A549 (cell line): ENCODE measurements at regions of chr1 and their contacts with region 1.

Region 1: DNA sequence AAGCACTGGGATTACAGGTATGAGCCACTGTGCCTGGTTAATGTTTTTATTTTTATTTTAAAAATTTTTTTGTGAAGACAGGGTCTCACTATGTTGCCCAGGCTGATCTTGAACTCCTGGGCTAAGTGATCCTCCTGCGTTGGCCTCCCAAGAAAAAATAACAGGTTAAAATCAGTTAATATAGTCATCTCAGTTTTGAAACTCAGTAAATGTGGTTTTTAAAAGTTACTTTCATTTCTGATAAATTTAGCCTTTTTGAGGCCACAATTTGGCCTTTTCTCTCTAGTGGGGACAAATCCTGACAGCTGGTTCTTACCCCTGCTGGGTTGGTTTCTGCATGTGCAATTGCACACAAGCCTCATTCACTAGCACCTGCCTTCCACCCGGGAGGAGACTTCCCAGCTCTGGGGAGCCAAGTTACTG is 13.3 kb downstream of the PMF1 start:
- DNase-seq: no peak
- ATAC-seq: no peak
- H3K4me3 ChIP-seq: no peak overlapping the region
- H3K27ac ChIP-seq: no peak overlapping the region
- H3K4me1 ChIP-seq: peaks cover 14% of the 10 kb centered on the region
- CTCF ChIP-seq: no peak
- EP300 ChIP-seq: no peak
- POLR2A ChIP-seq: no peak
- RAD21 ChIP-seq: no peak

Region 2: GRCh38 chr1:156082309-156083091 is 143.6 kb before region 1 on chr1 and contains the start of gene MEX3A:
- CTCF ChIA-PET with region 1: interaction called, 291 read pairs
- POLR2A ChIA-PET with region 1: no interaction called
- DNase-seq: peak; percentile 59 to 86
- ATAC-seq: peak; percentile 78 to 88
- H3K4me3 ChIP-seq: peak within 1 kb of the TSS; percentile 83
- H3K27ac ChIP-seq: peak within 1 kb of the TSS; percentile 88 to 93
- H3K4me1 ChIP-seq: peaks cover 29% of the 10 kb centered on the region
- CTCF ChIP-seq: no peak
- EP300 ChIP-seq: no peak
- POLR2A ChIP-seq: 0 out of 2 replicates have a peak, but pooled peaks have one; percentile 9
- RAD21 ChIP-seq: no peak
- polyA plus RNA-seq, gene MEX3A: 1.8 and 2.4 TPM in 2 replicates

Region 3: GRCh38 chr1:156160743-156161171 is 65.4 kb before region 1 on chr1:
- CTCF ChIA-PET with region 1: interaction called, 639 read pairs
- POLR2A ChIA-PET with region 1: no interaction called
- DNase-seq: no peak
- ATAC-seq: no peak
- H3K4me3 ChIP-seq: no peak overlapping the region
- H3K27ac ChIP-seq: no peak overlapping the region
- H3K4me1 ChIP-seq: no peaks in the 10 kb centered on the region
- CTCF ChIP-seq: no peak
- EP300 ChIP-seq: no peak
- POLR2A ChIP-seq: no peak
- RAD21 ChIP-seq: no peak

Region 4: GRCh38 chr1:156193488-156194299 is 32.4 kb before region 1 on chr1 and contains the start of gene SLC25A44:
- CTCF ChIA-PET with region 1: interaction called, 47 read pairs
- POLR2A ChIA-PET with region 1: interaction called, 7 read pairs
- DNase-seq: peak; percentile 95 to 99
- ATAC-seq: peak; percentile 98
- H3K4me3 ChIP-seq: peak within 1 kb of the TSS; percentile 84
- H3K27ac ChIP-seq: peak within 1 kb of the TSS; percentile 88 to 89
- H3K4me1 ChIP-seq: 0 out of 3 replicates have a peak, but pooled peaks cover 9% of the 10 kb centered on the region
- CTCF ChIP-seq: no peak
- EP300 ChIP-seq: no peak
- POLR2A ChIP-seq: peak; percentile 83
- RAD21 ChIP-seq: no peak; a peak in 1 of 5 replicates
- polyA plus RNA-seq, gene SLC25A44: 30.7 and 38.8 TPM in 2 replicates

Region 5: DNA sequence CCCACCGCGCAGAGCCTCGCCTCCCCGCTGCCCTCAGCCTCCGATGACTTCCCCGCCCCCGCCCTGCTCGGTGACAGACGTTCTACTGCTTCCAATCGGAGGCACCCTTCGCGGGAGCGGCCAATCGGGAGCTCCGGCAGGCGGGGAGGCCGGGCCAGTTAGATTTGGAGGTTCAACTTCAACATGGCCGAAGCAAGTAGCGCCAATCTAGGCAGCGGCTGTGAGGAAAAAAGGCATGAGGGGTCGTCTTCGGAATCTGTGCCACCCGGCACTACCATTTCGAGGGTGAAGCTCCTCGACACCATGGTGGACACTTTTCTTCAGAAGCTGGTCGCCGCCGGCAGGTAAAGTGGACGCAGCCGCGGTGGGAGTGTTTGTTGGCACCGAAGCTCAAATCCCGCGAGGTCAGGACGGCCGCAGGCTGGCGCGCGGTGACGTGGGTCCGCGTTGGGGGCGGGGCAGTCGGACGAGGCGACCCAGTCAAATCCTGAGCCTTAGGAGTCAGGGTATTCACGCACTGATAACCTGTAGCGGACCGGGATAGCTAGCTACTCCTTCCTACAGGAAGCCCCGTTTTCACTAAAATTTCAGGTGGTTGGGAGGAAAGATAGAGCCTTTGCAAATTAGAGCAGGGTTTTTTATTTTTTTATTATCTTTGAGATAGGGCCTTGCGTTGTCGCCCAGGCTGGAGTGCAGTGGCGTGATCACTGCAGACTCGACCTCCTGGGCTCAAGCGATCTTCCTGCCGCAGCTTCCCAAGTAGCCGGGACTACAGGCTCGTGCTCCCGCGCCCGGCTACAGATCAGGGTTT is 13.1 kb before region 1 on chr1 and contains the start of gene PMF1:
- CTCF ChIA-PET with region 1: interaction called, 84 read pairs
- POLR2A ChIA-PET with region 1: interaction called, 13 read pairs
- DNase-seq: peak; percentile 96 to 100
- ATAC-seq: peak; percentile 98
- H3K4me3 ChIP-seq: peak within 1 kb of the TSS; percentile 65
- H3K27ac ChIP-seq: peak within 1 kb of the TSS; percentile 93 to 96
- H3K4me1 ChIP-seq: peaks cover 13% of the 10 kb centered on the region; the same call in 2 of the 3 replicates
- CTCF ChIP-seq: no peak
- EP300 ChIP-seq: no peak
- POLR2A ChIP-seq: peak; percentile 67
- RAD21 ChIP-seq: no peak
- polyA plus RNA-seq, gene PMF1: 61.4 and 63.9 TPM in 2 replicates